ENCODE measurements at regions of chr6 and their contacts with region 1.

Region 1: GRCh38 chr6:31739639-31740396 is at the start of gene MSH5:
- DNase-seq: peak; percentile 99
- H3K4me3 Mint-ChIP-seq: peak within 1 kb of the TSS; percentile 88
- H3K27ac Mint-ChIP-seq: peak within 1 kb of the TSS; percentile 81
- H3K4me1 Mint-ChIP-seq: peaks cover 40% of the 10 kb centered on the region
- H3K27me3 Mint-ChIP-seq: no peaks in the 10 kb centered on the region
- CTCF ChIP-seq: no peak
- total RNA-seq, gene MSH5: 36.6 and 43.1 TPM in 2 replicates

Region 2: DNA sequence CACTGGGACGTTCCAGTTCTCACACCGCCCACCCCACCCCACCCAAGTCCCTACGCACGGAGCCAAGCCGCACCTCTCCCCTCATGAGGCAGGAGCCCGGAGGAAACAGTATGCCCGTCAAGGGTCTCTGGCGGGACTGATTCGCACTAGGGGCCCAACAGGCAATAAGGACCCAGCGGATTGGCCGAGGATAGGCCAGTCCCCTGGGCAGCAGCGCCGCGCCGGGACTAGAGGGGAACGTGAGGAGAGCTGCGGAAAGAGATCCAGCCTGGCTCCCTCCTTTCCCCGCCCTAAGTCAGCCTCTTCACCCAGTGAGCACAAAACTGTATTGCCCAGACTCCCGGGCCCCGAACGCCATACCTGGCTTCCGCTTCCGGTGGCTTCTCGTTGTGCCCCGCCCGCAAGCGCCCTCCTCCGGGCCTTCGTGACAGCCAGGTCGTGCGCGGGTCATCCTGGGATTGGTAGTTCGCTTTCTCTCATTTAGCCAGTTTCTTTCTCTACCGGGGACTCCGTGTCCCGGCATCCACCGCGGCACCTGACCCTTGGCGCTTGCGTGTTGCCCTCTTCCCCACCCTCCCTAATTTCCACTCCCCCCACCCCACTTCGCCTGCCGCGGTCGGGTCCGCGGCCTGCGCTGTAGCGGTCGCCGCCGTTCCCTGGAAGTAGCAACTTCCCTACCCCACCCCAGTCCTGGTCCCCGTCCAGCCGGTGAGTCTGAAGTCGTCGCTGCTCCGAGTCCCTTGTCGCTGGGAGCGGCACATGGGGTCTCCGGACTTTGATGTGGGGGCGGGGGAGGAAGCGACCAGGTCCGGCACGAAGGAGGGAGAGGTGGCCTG is 74.1 kb before region 1 on chr6 and contains the start of gene CSNK2B:
- CTCF ChIA-PET with region 1: no interaction called
- POLR2A ChIA-PET with region 1: interaction called, 17 read pairs
- intact Hi-C with region 1: no loop called
- DNase-seq: peak; percentile 98
- H3K4me3 Mint-ChIP-seq: peak within 1 kb of the TSS; percentile 99
- H3K27ac Mint-ChIP-seq: peak within 1 kb of the TSS; percentile 99
- H3K4me1 Mint-ChIP-seq: peaks cover 31% of the 10 kb centered on the region
- H3K27me3 Mint-ChIP-seq: no peaks in the 10 kb centered on the region
- CTCF ChIP-seq: no peak
- total RNA-seq, gene CSNK2B: 197 and 209 TPM in 2 replicates

Region 3: GRCh38 chr6:31729515-31729978 is 10.3 kb before region 1 on chr6:
- CTCF ChIA-PET with region 1: interaction called, 7 read pairs
- POLR2A ChIA-PET with region 1: interaction called, 26 read pairs
- intact Hi-C with region 1: no loop called
- DNase-seq: peak; percentile 88
- H3K4me3 Mint-ChIP-seq: peak overlapping the region; percentile 92
- H3K27ac Mint-ChIP-seq: peak overlapping the region; percentile 86
- H3K4me1 Mint-ChIP-seq: peaks cover 7% of the 10 kb centered on the region
- H3K27me3 Mint-ChIP-seq: no peaks in the 10 kb centered on the region
- CTCF ChIP-seq: no peak

Region 4: DNA sequence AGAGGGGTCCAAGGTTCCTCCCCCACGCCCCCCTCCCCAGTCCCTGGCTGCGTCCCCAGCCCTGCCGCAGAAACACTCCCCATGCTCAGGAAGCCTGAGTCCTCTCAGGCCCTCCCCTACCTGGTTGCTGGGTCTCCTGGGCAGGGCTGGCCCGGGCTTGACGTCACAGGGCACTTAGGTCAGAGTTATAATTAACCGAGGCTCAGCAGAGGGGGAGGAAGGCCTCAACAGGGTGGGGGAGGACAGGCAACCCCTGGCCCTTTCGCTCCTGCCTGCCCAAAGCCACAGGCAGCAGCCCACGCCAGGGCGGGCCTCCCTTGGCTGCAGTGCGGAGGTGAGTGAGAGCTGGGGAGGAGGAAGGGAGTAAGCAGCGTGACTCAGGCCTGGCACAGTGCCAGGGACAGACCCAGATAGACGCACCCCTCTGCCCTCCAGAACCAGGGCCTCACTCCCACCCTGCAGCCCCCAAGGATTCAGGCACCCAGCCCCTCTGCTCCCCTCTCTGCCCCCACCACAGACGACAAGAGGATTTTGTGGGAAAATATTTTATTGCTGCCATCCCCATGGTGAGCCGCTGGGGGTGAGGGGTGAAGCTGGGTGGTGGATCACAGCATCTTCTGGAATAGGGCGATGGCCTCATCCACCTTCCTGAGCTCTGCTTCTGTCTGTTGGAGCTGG is 37.3 kb after region 1 on chr6 and contains the start of gene VWA7:
- CTCF ChIA-PET with region 1: no interaction called
- POLR2A ChIA-PET with region 1: interaction called, 11 read pairs
- intact Hi-C with region 1: no loop called
- DNase-seq: peak; percentile 95
- H3K4me3 Mint-ChIP-seq: peak within 1 kb of the TSS; percentile 26
- H3K27ac Mint-ChIP-seq: no peak within 1 kb of the TSS
- H3K4me1 Mint-ChIP-seq: peaks cover 26% of the 10 kb centered on the region
- H3K27me3 Mint-ChIP-seq: no peaks in the 10 kb centered on the region
- CTCF ChIP-seq: no peak
- total RNA-seq, gene VWA7: 2.0 and 3.1 TPM in 2 replicates

Region 5: DNA sequence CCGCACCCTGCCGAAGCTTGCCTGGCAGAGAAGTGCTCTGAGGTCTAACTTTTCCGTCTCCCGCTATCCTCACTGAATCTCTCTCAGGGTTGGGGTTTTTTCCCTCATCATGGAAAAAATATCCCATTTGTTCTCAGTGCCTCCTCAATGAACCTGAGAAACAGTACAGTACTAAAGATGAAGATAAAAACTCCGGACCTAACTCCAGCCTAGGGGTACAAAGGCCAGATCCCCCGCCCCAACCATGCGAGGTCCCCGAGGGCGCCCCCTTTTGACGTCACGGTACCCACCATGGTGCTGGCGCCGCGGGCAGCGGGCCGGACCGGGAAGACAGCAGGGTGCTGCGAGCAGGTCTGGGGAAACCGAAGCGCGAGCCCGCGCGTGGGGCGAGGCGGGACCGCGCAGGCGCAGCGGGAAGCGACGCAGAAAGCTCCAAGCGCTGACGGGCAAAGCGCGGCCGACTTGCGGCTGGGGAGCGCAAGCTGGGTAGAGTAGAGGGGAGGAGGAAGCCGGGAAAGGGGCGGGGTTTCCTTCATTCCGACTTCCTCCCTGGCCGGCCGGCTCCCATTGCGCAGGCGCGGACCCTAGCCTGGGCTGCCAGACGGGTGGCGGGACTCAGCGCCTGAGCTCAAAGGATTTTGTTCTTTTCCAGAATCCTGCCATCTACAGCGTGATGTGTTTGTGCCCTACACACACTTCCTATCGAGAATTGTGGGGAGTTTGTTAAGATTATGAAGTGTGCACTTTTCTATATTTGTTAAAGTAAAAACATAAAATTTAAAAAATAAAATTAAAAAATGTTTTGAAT is 66.9 kb after region 1 on chr6 and contains the start of gene LSM2:
- CTCF ChIA-PET with region 1: interaction called, 4 read pairs
- POLR2A ChIA-PET with region 1: interaction called, 17 read pairs
- intact Hi-C with region 1: no loop called
- DNase-seq: peak; percentile 98
- H3K4me3 Mint-ChIP-seq: peak within 1 kb of the TSS; percentile 82
- H3K27ac Mint-ChIP-seq: peak within 1 kb of the TSS; percentile 84
- H3K4me1 Mint-ChIP-seq: peaks cover 6% of the 10 kb centered on the region
- H3K27me3 Mint-ChIP-seq: no peaks in the 10 kb centered on the region
- CTCF ChIP-seq: peak; percentile 27
- total RNA-seq, gene LSM2: 36.9 and 47.4 TPM in 2 replicates

Region 6: DNA sequence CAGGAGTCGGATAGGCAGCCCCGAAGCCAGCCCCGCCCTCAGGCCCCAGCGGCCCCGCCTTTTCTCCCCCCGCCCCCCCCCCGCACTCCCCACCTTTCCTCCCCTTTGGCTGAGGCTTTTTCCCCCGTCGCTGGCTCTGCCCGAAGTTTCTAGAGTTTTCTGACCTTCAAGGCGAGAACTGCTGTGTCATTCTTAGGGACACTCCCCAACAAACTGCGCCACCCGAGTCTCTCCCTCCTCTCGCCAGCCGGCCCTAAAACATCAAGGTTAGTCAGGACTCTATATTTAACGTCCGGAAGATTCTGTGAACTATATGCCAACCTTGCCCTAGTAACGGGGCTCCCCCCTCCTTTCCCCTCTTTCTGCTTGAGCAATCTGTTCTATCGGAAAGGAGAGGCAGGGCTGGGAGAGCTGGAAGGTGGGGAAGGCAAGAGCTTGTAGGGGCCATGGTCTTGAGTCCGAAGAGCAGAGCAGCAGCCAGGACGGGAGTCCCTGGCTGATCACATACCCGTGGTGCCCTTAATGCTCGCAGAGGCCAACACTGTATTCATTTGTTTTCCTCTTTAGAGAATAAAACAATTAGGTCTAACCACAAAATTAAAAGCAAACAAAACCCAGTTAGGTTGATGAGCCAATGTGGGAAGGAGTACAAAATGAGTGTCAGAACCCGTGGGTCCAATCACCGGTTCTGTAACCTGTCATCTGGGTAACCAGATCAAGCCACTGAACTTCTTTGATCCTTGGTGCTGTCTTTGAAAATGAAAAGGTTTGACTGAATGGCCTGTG is 82.4 kb after region 1 on chr6:
- CTCF ChIA-PET with region 1: interaction called, 3 read pairs
- POLR2A ChIA-PET with region 1: interaction called, 95 read pairs
- intact Hi-C with region 1: no loop called
- DNase-seq: peak; percentile 94
- H3K4me3 Mint-ChIP-seq: peak overlapping the region; percentile 91
- H3K27ac Mint-ChIP-seq: peak overlapping the region; percentile 99
- H3K4me1 Mint-ChIP-seq: peaks cover 29% of the 10 kb centered on the region
- H3K27me3 Mint-ChIP-seq: no peaks in the 10 kb centered on the region
- CTCF ChIP-seq: no peak

Region 7: GRCh38 chr6:31834434-31835198 is 94.8 kb after region 1 on chr6:
- CTCF ChIA-PET with region 1: interaction called, 4 read pairs
- POLR2A ChIA-PET with region 1: interaction called, 90 read pairs
- intact Hi-C with region 1: no loop called
- DNase-seq: peak; percentile 87
- H3K4me3 Mint-ChIP-seq: peak overlapping the region; percentile 86
- H3K27ac Mint-ChIP-seq: peak overlapping the region; percentile 99
- H3K4me1 Mint-ChIP-seq: peaks cover 18% of the 10 kb centered on the region
- H3K27me3 Mint-ChIP-seq: no peaks in the 10 kb centered on the region
- CTCF ChIP-seq: no peak

Measured in MCF 10A (cell line).